ENCODE measurements at regions of chr2 and their contacts with region 1.

Region 1: DNA sequence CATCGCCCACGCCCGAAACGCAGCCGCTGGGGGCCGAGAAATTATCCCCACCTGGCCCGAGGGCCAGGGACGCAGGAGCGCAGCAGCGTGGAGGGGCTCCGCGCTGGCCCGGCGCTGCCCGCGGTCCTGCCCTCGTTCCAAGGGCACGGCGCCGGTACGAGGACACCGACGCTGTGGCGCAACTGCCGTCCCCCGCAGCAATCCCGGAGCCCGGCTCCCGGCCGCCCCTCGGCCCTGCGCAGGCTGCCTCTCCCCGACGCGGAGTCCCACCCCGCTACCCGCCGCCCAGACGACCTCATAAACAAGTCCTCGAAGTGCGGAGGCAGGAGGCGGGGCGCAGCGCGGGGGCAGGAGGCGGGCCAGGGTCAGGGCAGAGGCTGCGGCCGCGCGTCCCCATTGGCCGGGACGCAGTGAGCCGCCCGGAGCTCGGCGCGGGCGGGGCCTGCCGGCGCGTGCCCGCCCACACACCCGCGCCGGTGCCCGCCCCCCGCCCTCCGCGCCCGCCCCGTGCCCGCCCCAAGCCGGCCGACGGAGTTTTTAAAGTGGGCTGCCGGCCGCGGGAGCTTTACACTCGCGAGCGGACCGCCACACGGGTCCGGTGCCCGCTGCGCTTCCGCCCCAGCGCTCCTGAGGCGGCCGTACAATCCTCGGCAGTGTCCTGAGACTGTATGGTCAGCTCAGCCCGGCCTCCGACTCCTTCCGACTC is at the start of gene EPAS1:
- DNase-seq: peak; percentile 84
- ATAC-seq: peak; percentile 76
- H3K4me3 ChIP-seq: peak within 1 kb of the TSS; percentile 91 to 98 (median 96)
- H3K27ac ChIP-seq: peak within 1 kb of the TSS; percentile 78
- H3K4me1 ChIP-seq: peaks cover 32% of the 10 kb centered on the region
- H3K27me3 ChIP-seq: peaks cover 0 to 13% of the 10 kb centered on the region in 2 experiments; a peak in 2 of 5 replicates
- CTCF ChIP-seq: peak; percentile 15
- EP300 ChIP-seq: no peak
- POLR2A ChIP-seq: peak in 1 of 2 experiments; percentile 87; a peak in 2 of 4 replicates
- RAD21 ChIP-seq: peak; percentile 67
- total RNA-seq, gene EPAS1: 47.1 and 64.9 TPM in 2 replicates

Region 2: GRCh38 chr2:45650851-45651414 is 646.1 kb before region 1 on chr2:
- CTCF ChIA-PET with region 1: no interaction called
- POLR2A ChIA-PET with region 1: no interaction called
- in situ Hi-C with region 1: no loop called
- intact Hi-C with region 1: loop called (anchors 2 kb)
- DNase-seq: peak; percentile 92
- ATAC-seq: peak; percentile 88
- H3K4me3 ChIP-seq: peak overlapping the region; percentile 80 to 89 (median 82)
- H3K27ac ChIP-seq: peak overlapping the region; percentile 57
- H3K4me1 ChIP-seq: peaks cover 42% of the 10 kb centered on the region
- H3K27me3 ChIP-seq: peaks cover 0 to 15% of the 10 kb centered on the region in 2 experiments; a peak in 2 of 5 replicates
- CTCF ChIP-seq: peak; percentile 82
- EP300 ChIP-seq: peak in 1 of 2 experiments; percentile 31; a peak in 1 of 4 replicates
- POLR2A ChIP-seq: peak in 1 of 2 experiments; percentile 49; a peak in 1 of 4 replicates
- RAD21 ChIP-seq: peak; percentile 56

Region 3: GRCh38 chr2:46010925-46011490 is 286.0 kb before region 1 on chr2:
- CTCF ChIA-PET with region 1: no interaction called
- POLR2A ChIA-PET with region 1: no interaction called
- in situ Hi-C with region 1: no loop called
- intact Hi-C with region 1: loop called (anchors 5 kb)
- DNase-seq: peak; percentile 47
- ATAC-seq: peak; percentile 83
- H3K4me3 ChIP-seq: no peak overlapping the region
- H3K27ac ChIP-seq: no peak overlapping the region
- H3K4me1 ChIP-seq: peaks cover 8% of the 10 kb centered on the region; the same call in 1 of the 2 replicates
- H3K27me3 ChIP-seq: no peaks in the 10 kb centered on the region
- CTCF ChIP-seq: peak; percentile 73
- EP300 ChIP-seq: no peak
- POLR2A ChIP-seq: no peak
- RAD21 ChIP-seq: peak; percentile 53

Region 4: DNA sequence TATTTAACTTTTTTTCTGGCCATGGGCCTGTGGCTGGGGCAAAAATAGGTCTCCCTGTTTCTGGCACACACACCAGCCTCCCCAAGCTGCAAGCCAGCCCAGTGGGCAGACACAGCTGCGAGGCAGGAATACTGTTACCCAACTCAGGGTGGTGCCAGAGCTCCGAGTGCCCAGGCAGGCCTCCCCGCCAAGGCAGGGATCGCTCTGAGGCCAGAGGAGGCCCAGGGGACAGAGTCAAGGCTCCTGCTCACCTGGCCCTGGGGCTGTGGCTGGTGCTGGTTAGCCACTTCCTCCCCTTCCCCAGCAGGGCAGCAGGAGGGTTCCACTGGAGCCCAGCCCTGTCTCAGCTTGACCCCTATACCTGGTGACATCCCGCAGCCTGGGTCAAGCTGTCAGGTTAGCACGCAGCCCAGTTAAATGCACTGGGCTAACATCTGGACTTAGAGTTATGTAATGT is 66.8 kb before region 1 on chr2:
- CTCF ChIA-PET with region 1: no interaction called
- POLR2A ChIA-PET with region 1: interaction called, 4 read pairs
- in situ Hi-C with region 1: no loop called
- intact Hi-C with region 1: loop called (anchors 2 kb)
- DNase-seq: peak; percentile 24
- ATAC-seq: peak; percentile 76
- H3K4me3 ChIP-seq: peak overlapping the region in 2 of 3 experiments; percentile 23 to 53; a peak in 4 of 6 replicates
- H3K27ac ChIP-seq: no peak overlapping the region
- H3K4me1 ChIP-seq: peaks cover 68% of the 10 kb centered on the region
- H3K27me3 ChIP-seq: peaks cover 0 to 6% of the 10 kb centered on the region in 2 experiments; a peak in 3 of 5 replicates
- CTCF ChIP-seq: peak; percentile 73
- EP300 ChIP-seq: no peak
- POLR2A ChIP-seq: no peak
- RAD21 ChIP-seq: peak; percentile 51

Region 5: GRCh38 chr2:46329803-46330775 is 33.1 kb after region 1 on chr2:
- CTCF ChIA-PET with region 1: no interaction called
- POLR2A ChIA-PET with region 1: interaction called, 11 read pairs
- in situ Hi-C with region 1: no loop called
- intact Hi-C with region 1: loop called (anchors 2 kb)
- DNase-seq: peak; percentile 67
- ATAC-seq: 0 out of 3 replicates have a peak, but pooled peaks have one; percentile 4
- H3K4me3 ChIP-seq: no peak overlapping the region
- H3K27ac ChIP-seq: no peak overlapping the region
- H3K4me1 ChIP-seq: peaks cover 100% of the 10 kb centered on the region
- H3K27me3 ChIP-seq: no peaks in the 10 kb centered on the region
- CTCF ChIP-seq: no peak
- EP300 ChIP-seq: no peak
- POLR2A ChIP-seq: no peak
- RAD21 ChIP-seq: no peak

Region 6: GRCh38 chr2:46410273-46411247 is 113.6 kb after region 1 on chr2:
- CTCF ChIA-PET with region 1: no interaction called
- POLR2A ChIA-PET with region 1: interaction called, 11 read pairs
- in situ Hi-C with region 1: no loop called
- intact Hi-C with region 1: no loop called
- DNase-seq: no peak
- ATAC-seq: no peak
- H3K4me3 ChIP-seq: no peak overlapping the region
- H3K27ac ChIP-seq: peak overlapping the region; percentile 86
- H3K4me1 ChIP-seq: peaks cover 97% of the 10 kb centered on the region
- H3K27me3 ChIP-seq: no peaks in the 10 kb centered on the region
- CTCF ChIP-seq: no peak
- EP300 ChIP-seq: no peak
- POLR2A ChIP-seq: no peak
- RAD21 ChIP-seq: no peak